Cardiac septum (tissue), 1 donor: ENCODE measurements at regions of chr12 and their contacts with region 1.

Region 1: DNA sequence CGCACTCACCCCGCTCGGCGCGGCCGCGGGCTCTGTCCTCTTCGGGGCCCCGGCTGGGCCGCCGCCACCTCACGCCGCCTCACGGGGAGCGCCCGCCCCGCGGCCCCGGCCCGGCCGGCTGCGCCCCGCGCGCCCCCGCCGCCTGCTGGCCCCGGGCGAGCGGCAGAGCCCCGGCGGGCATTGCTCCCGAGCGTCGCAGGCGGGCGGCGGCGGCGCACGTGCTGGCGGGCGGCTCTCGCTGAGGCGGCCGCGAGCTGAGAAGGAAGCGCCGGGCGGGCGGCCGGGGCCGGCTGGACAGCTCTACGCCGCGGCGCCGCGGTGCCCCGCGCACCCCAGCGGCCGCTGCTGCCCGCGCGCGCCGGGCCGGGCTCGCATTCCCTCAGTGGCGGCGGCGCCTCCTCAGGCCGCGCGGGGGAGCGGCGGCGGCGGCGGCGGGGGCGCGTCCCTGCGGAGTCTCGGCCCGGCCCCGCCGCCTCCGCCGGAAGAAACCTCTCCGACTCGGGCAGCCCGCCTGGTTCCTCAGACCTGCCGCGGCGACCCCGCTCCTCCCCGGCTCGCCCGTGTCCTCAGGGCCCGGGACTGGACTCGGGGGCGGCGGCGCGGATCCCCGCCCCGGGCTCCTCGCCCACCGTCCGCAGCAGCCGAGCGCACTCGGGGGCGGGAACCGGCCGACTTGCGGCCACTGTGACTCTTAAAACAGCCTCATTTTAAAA is at the start of gene PITPNM2:
- DNase-seq: no peak
- total RNA-seq, gene PITPNM2: 22.2 TPM

Region 2: GRCh38 chr12:122980183-122981046 is 170.5 kb before region 1 on chr12 and contains the start of gene ARL6IP4:
- intact Hi-C with region 1: loop called (anchors 5 kb)
- DNase-seq: peak; percentile 87
- total RNA-seq, gene ARL6IP4: 139 TPM

Region 3: DNA sequence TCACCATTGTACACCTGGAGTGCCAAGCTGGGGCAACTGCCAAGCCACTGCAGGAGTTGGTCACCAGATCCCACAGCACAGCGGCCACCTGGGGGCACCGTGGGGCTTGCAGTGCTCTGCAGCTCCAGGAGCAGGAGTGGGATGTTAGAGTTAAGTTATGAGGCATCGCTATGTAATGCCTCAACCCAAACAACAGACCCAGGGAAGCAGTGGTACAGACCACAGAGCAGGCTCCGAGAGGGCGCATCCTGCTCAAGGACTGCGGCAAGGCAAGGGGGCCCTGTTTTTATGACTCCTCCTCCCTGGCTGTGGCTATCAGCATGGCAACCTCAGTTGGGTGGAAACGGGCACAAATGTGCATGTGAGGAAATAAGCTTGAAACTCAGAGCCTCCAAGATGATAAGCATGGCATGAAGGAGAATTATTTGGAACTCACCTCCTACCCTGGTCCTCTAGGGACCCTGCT is 107.3 kb before region 1 on chr12:
- intact Hi-C with region 1: loop called (anchors 2 kb)
- DNase-seq: peak; percentile 87

Region 4: GRCh38 chr12:123075646-123076171 is 75.2 kb before region 1 on chr12:
- intact Hi-C with region 1: loop called (anchors 2 kb)
- DNase-seq: no peak